Left cardiac atrium (tissue), 4 donors: ENCODE measurements at regions of chr6 and their contacts with region 1.

Region 1: GRCh38 chr6:57172136-57173055 is at the start of gene BAG2:
- DNase-seq: peak; percentile 89
- ATAC-seq: peak; percentile 96
- total RNA-seq, gene BAG2: 11.8 to 13.0 TPM

Region 2: GRCh38 chr6:57221936-57222742 is 49.7 kb after region 1 on chr6 and contains the start of gene RAB23:
- intact Hi-C with region 1: loop called in 1 of 2 experiments (anchors 2 kb)
- DNase-seq: peak; percentile 86
- ATAC-seq: peak; percentile 99
- total RNA-seq, gene RAB23: 10.7 to 13.8 TPM

Region 3: GRCh38 chr6:57316581-57317059 is 144.2 kb after region 1 on chr6:
- intact Hi-C with region 1: loop called in 1 of 2 experiments (anchors 5 kb)
- DNase-seq: peak; percentile 84
- ATAC-seq: peak; percentile 91 to 95